IMR-90 (cell line): ENCODE measurements at regions of chr16 and their contacts with region 1.

Region 1: DNA sequence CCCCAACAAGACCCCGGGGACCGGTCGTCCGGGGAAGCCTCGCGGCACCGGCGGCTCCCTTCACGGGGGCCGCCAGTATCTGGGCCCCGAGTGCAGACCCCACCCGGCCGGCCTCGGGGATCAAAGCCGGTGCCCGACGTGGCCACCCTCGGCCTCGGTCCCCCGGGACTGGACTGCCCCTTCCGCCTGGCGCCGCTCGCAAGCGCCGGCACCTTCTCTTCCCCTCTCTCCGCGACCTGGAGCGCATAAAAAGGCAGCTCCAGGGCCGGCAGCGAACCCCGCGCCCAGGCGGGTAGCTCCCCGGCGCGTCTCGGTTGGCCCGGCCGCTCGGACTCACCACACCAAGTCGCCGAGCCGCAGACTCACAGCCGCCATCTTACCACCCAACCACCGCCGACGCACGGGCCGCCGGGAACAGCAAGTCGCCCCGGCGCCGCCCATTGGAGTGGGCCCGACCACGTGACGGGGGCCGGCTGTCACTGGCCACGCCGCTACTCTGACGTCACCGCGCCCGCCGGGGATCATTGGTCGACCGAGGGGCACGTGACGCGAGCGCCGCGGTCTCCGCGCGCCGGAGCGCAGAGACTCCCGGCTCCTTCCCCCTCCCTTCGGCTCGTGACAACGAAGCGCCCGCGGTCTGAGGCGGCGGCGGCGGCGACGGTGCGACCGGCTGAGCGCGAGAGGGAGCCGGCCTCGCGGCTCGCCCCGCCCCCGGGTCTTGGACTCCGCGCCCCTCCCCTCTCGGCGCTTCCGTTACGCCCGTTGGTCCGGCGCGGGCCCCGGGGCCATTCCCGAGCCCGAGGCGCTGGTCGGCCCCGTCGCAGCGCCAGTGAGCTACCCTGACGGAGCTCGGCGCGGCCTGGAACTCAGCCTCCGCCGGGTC is at the starts of genes GLYR1 and UBN1:
- DNase-seq: peak; percentile 95
- ATAC-seq: peak; percentile 92
- H3K4me3 ChIP-seq: peak within 1 kb of the TSS; percentile 88
- H3K27ac ChIP-seq: peak within 1 kb of the TSS; percentile 90
- H3K4me1 ChIP-seq: peaks cover 10% of the 10 kb centered on the region
- H3K27me3 ChIP-seq: no peaks in the 10 kb centered on the region
- CTCF ChIP-seq: no peak
- POLR2A ChIP-seq: peak; percentile 87
- RAD21 ChIP-seq: no peak
- total RNA-seq, gene GLYR1: 26.0 and 27.8 TPM in 2 replicates
- total RNA-seq, gene UBN1: 5.7 and 7.8 TPM in 2 replicates

Region 2: GRCh38 chr16:4746991-4747574 is 100.0 kb before region 1 on chr16:
- CTCF ChIA-PET with region 1: no interaction called
- POLR2A ChIA-PET with region 1: no interaction called
- dilution Hi-C with region 1: no loop called
- in situ Hi-C with region 1: no loop called
- intact Hi-C with region 1: no loop called
- DNase-seq: no peak
- ATAC-seq: no peak
- H3K4me3 ChIP-seq: no peak overlapping the region
- H3K27ac ChIP-seq: no peak overlapping the region
- H3K4me1 ChIP-seq: no peaks in the 10 kb centered on the region
- H3K27me3 ChIP-seq: no peaks in the 10 kb centered on the region
- CTCF ChIP-seq: no peak
- POLR2A ChIP-seq: no peak
- RAD21 ChIP-seq: no peak

Region 3: GRCh38 chr16:5033256-5034169 is 186.4 kb after region 1 on chr16 and contains the start of gene NAGPA:
- CTCF ChIA-PET with region 1: no interaction called
- POLR2A ChIA-PET with region 1: no interaction called
- dilution Hi-C with region 1: no loop called
- in situ Hi-C with region 1: no loop called
- intact Hi-C with region 1: loop called (anchors 5 kb)
- DNase-seq: peak; percentile 81
- ATAC-seq: peak; percentile 90
- H3K4me3 ChIP-seq: peak within 1 kb of the TSS; percentile 86
- H3K27ac ChIP-seq: peak within 1 kb of the TSS; percentile 58
- H3K4me1 ChIP-seq: peaks cover 3% of the 10 kb centered on the region; the same call in 1 of the 2 replicates
- H3K27me3 ChIP-seq: no peaks in the 10 kb centered on the region
- CTCF ChIP-seq: no peak
- POLR2A ChIP-seq: no peak
- RAD21 ChIP-seq: no peak
- total RNA-seq, gene NAGPA: 5.3 and 6.5 TPM in 2 replicates

Region 4: GRCh38 chr16:5649762-5650743 is 802.9 kb after region 1 on chr16:
- CTCF ChIA-PET with region 1: no interaction called
- POLR2A ChIA-PET with region 1: no interaction called
- dilution Hi-C with region 1: no loop called
- in situ Hi-C with region 1: no loop called
- intact Hi-C with region 1: no loop called
- DNase-seq: no peak
- ATAC-seq: no peak
- H3K4me3 ChIP-seq: no peak overlapping the region
- H3K27ac ChIP-seq: no peak overlapping the region
- H3K4me1 ChIP-seq: no peaks in the 10 kb centered on the region
- H3K27me3 ChIP-seq: no peaks in the 10 kb centered on the region
- CTCF ChIP-seq: no peak
- POLR2A ChIP-seq: no peak
- RAD21 ChIP-seq: no peak